B cell (primary cell): ENCODE measurements at regions of chr7 and their contacts with region 1.

Region 1: DNA sequence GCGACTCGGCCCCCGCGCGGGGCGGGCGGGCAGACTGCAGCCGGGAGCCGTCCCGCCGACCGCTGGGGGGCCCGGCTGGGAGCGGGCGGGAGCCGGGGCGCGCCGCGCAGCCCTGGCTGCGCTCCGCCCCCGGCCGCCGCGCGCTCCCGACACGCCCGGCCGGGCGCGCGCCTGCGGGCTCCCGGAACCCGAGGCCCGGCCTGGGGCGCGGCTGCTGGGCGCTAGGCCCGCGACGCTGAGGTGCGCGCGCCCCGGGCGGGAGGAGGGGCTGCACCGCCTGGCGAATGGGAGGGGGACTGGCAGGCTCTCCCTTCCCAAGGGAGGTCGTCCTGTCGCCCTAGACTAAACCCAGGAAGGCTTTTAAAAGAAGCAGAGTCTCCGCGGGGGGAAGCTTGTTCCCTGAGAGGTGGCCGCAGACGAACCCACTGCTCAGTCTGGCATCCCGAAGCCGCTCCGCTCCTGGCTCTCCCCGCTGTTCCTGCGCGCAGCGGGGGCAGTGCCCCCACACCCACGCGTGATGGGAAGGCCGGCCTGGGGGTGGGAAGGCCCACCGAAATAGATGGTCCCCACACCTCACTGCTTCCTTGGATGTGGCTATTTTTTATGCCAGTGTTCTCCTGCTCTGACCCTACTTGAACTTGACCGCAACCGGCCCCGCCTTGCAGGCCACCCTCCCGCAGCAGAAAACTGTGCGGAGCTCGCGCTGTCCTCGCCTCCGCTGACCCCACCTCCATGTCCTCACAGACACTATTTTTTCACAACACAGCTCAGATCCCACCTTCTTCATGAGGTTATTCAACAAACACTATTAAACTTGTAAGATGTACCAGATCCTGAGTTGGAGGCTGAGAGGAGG is at the start of gene VOPP1:
- DNase-seq: peak; percentile 85
- ATAC-seq: peak; percentile 70
- H3K4me3 ChIP-seq: peak within 1 kb of the TSS; percentile 32 to 97 (median 79)
- H3K4me3 Mint-ChIP-seq: peak within 1 kb of the TSS; percentile 91
- H3K27ac ChIP-seq: peak within 1 kb of the TSS; percentile 74 to 85
- H3K27ac Mint-ChIP-seq: peak within 1 kb of the TSS; percentile 96
- H3K4me1 ChIP-seq: peaks cover 49 to 57% of the 10 kb centered on the region in 2 donors
- H3K4me1 Mint-ChIP-seq: peaks cover 49% of the 10 kb centered on the region
- H3K27me3 ChIP-seq: no peaks in the 10 kb centered on the region
- H3K27me3 Mint-ChIP-seq: no peaks in the 10 kb centered on the region
- CTCF ChIP-seq: no peak
- total RNA-seq, gene VOPP1: 256 and 267 TPM in 2 replicates

Region 2: DNA sequence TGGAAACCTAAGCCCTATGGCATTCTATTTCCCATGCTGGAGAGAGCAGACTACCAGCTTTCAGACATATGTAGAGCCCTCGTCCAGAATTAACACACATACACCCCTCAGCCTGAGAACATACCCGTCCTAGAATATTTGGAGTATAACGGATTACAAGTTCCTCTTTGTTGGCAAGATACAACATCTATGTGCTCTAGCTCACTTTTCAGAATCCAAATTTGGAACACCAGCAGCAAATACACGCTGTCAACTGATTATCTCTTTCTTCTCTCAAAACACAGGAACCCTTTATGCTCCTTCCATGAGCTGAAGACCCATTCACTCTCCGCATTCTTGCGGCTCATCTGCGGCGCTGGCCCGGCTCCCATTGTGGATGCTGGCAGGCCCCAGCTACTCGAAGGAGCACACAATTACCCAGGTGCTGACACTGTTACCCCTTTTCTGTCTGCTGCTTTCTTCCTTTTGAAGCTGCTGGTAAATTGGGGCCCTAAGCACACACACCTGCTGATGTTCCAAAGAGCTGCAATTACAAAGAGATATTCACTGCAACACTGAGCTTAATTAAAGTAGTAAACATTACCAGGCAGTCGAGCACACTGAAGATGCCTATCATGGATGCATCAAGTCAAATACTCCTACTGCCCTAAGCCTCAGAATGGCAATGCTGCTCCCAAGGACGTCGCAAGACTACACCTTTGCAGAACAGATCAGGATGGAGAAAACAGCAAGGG is 70.3 kb before region 1 on chr7:
- CTCF ChIA-PET with region 1: no interaction called
- POLR2A ChIA-PET with region 1: no interaction called
- intact Hi-C with region 1: no loop called
- DNase-seq: no peak
- ATAC-seq: no peak
- H3K4me3 ChIP-seq: no peak overlapping the region
- H3K4me3 Mint-ChIP-seq: no peak overlapping the region
- H3K27ac ChIP-seq: no peak overlapping the region
- H3K27ac Mint-ChIP-seq: peak overlapping the region; percentile 64
- H3K4me1 ChIP-seq: peaks cover 14 to 20% of the 10 kb centered on the region in 2 donors
- H3K4me1 Mint-ChIP-seq: peaks cover 53% of the 10 kb centered on the region
- H3K27me3 ChIP-seq: no peaks in the 10 kb centered on the region
- H3K27me3 Mint-ChIP-seq: no peaks in the 10 kb centered on the region
- CTCF ChIP-seq: no peak

Region 3: GRCh38 chr7:55557666-55558188 is 14.9 kb before region 1 on chr7:
- CTCF ChIA-PET with region 1: interaction called, 4 read pairs
- POLR2A ChIA-PET with region 1: interaction called, 15 read pairs
- intact Hi-C with region 1: loop called (anchors 1 kb)
- DNase-seq: peak; percentile 59
- ATAC-seq: peak; percentile 79
- H3K4me3 ChIP-seq: peak overlapping the region in 2 of 5 experiments; percentile 20 to 43
- H3K4me3 Mint-ChIP-seq: peak overlapping the region; percentile 80
- H3K27ac ChIP-seq: peak overlapping the region; percentile 52 to 80
- H3K27ac Mint-ChIP-seq: peak overlapping the region; percentile 86
- H3K4me1 ChIP-seq: peaks cover 87 to 100% of the 10 kb centered on the region in 2 donors
- H3K4me1 Mint-ChIP-seq: peaks cover 92% of the 10 kb centered on the region
- H3K27me3 ChIP-seq: no peaks in the 10 kb centered on the region
- H3K27me3 Mint-ChIP-seq: no peaks in the 10 kb centered on the region
- CTCF ChIP-seq: no peak

Region 4: GRCh38 chr7:55651057-55651456 is 78.5 kb after region 1 on chr7:
- CTCF ChIA-PET with region 1: no interaction called
- POLR2A ChIA-PET with region 1: no interaction called
- intact Hi-C with region 1: no loop called
- DNase-seq: no peak
- ATAC-seq: no peak
- H3K4me3 ChIP-seq: no peak overlapping the region
- H3K4me3 Mint-ChIP-seq: no peak overlapping the region
- H3K27ac ChIP-seq: no peak overlapping the region
- H3K27ac Mint-ChIP-seq: no peak overlapping the region
- H3K4me1 ChIP-seq: no peaks in the 10 kb centered on the region
- H3K4me1 Mint-ChIP-seq: no peaks in the 10 kb centered on the region
- H3K27me3 ChIP-seq: no peaks in the 10 kb centered on the region
- H3K27me3 Mint-ChIP-seq: peaks cover 13% of the 10 kb centered on the region
- CTCF ChIP-seq: no peak

Region 5: DNA sequence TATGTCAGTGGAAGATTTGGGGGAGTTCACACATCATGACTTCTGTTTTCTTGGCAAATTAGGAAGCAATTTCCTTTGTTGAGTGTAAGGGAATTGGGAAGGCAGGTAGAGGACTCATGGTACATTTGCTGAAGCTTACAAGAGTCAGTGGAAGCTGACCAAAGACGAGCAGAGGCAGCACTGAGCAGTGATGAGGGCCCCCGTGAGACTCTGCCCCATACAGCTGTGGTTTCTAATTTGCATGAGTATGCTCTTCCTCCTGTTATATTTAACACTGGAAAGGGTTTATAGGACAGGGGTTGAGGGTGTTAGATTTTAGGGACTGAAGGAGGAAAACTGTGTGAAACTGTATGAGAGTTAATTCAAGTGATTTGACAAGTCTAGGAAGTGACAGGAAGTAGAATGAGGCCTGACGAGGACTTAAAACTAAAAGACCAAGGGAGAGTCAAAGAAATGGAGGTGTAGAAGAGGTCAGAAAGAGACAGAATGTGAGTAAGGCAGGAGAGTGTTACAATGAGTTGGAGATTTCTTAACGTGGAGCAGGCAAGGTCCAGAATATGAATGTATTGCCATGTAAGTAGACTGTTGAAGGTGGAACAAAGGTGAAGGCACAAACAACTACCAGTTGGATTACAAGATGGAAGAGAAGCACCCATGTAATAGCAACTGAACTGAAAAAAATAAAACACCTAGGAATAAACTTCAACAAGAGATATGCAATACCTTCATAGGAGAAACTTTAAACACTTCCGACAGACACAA is 355.6 kb after region 1 on chr7:
- CTCF ChIA-PET with region 1: no interaction called
- POLR2A ChIA-PET with region 1: no interaction called
- intact Hi-C with region 1: no loop called
- DNase-seq: no peak
- ATAC-seq: no peak
- H3K4me3 ChIP-seq: no peak overlapping the region
- H3K4me3 Mint-ChIP-seq: no peak overlapping the region
- H3K27ac ChIP-seq: no peak overlapping the region
- H3K27ac Mint-ChIP-seq: no peak overlapping the region
- H3K4me1 ChIP-seq: peaks cover 0 to 2% of the 10 kb centered on the region in 2 donors
- H3K4me1 Mint-ChIP-seq: peaks cover 7% of the 10 kb centered on the region
- H3K27me3 ChIP-seq: no peaks in the 10 kb centered on the region
- H3K27me3 Mint-ChIP-seq: no peaks in the 10 kb centered on the region
- CTCF ChIP-seq: no peak